ENCODE measurements at regions of chr1 and their contacts with region 1.

Region 1: GRCh38 chr1:156860113-156860627 is 495 bp upstream of the NTRK1 start:
- DNase-seq: peak; percentile 40
- H3K4me3 ChIP-seq: peak overlapping the region in 2 of 3 experiments; percentile 1 to 30
- H3K27ac ChIP-seq: no peak overlapping the region
- H3K4me1 ChIP-seq: peaks cover 17% of the 10 kb centered on the region
- H3K27me3 ChIP-seq: peaks cover 39 to 40% of the 10 kb centered on the region in 2 experiments
- CTCF ChIP-seq: peak; percentile 79 to 90
- POLR2A ChIP-seq: no peak

Region 2: GRCh38 chr1:156625436-156626078 is 234.6 kb before region 1 on chr1:
- CTCF ChIA-PET with region 1: interaction called, 12 read pairs
- POLR2A ChIA-PET with region 1: no interaction called
- dilution Hi-C with region 1: no loop called
- intact Hi-C with region 1: no loop called
- DNase-seq: peak; percentile 47
- H3K4me3 ChIP-seq: no peak overlapping the region
- H3K27ac ChIP-seq: no peak overlapping the region
- H3K4me1 ChIP-seq: peaks cover 10% of the 10 kb centered on the region
- H3K27me3 ChIP-seq: peaks cover 36% of the 10 kb centered on the region in 2 experiments
- CTCF ChIP-seq: peak; percentile 69 to 90
- POLR2A ChIP-seq: no peak

Region 3: GRCh38 chr1:156767101-156767878 is 92.9 kb before region 1 on chr1 and contains the start of gene PRCC:
- CTCF ChIA-PET with region 1: interaction called, 14 read pairs
- POLR2A ChIA-PET with region 1: no interaction called
- dilution Hi-C with region 1: no loop called
- intact Hi-C with region 1: loop called (anchors 1 kb)
- DNase-seq: peak; percentile 100
- H3K4me3 ChIP-seq: peak within 1 kb of the TSS; percentile 65 to 91 (median 74)
- H3K27ac ChIP-seq: peak within 1 kb of the TSS; percentile 80
- H3K4me1 ChIP-seq: peaks cover 18% of the 10 kb centered on the region
- H3K27me3 ChIP-seq: no peaks in the 10 kb centered on the region
- CTCF ChIP-seq: no peak
- POLR2A ChIP-seq: no peak
- total RNA-seq, gene PRCC: 65.1 and 71.5 TPM in 2 replicates

Region 4: DNA sequence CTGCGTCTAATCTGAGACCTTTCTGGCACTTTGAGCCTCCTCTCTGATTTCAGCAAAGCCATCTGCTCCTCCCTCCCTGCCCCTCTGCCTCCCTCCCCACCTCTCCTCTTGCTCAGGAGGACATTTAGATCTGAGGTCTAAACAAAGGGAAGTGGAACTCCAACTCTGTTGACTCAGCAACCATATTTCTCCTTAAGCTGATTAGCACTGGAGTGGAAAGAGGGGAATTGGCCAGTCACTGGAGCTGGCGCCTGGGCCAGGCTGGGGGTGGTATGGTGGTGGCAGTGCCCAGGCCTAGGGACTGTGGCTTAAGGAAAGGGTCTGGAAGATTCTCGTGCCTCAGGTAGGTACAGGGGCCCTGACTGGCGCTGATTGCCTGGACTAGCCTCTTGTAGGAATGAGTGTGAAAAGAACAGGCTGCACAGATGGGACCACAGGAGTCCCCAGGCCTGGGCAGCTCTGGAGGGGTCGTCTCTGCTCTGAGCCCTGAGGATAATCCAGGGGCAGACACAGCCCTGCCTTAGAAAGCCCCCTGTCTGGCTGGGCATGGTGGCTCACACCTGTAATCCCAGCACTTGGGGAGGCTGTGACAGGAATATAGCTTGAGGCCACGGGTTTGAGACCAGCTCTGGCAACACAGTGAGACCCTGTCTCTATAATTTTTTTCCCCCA is 55.5 kb before region 1 on chr1:
- CTCF ChIA-PET with region 1: interaction called, 39 read pairs
- POLR2A ChIA-PET with region 1: no interaction called
- dilution Hi-C with region 1: no loop called
- intact Hi-C with region 1: no loop called
- DNase-seq: peak; percentile 10
- H3K4me3 ChIP-seq: no peak overlapping the region
- H3K27ac ChIP-seq: no peak overlapping the region
- H3K4me1 ChIP-seq: peaks cover 10% of the 10 kb centered on the region
- H3K27me3 ChIP-seq: no peaks in the 10 kb centered on the region
- CTCF ChIP-seq: no peak
- POLR2A ChIP-seq: no peak

Region 5: DNA sequence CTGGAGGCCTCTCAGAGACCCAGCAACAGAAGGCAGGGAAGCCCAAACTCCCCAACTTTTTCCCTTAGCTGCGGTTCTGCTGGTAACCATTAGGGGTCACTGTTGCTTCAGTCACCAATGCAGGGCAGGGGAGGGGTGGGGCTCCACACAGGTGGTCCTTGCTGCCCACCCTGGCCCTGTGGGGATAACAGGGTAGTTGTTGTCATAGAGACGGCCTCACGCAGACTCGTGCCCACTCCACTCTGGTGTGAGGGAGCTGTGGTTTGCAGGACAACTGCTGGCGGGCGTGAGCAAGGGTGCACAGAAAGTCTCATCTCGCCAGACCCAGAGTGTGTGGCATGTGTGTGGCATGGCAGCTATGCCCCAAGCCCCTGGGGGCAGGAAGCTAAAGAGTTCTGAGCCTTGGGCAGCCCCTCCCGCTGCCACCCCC is 21.2 kb before region 1 on chr1:
- CTCF ChIA-PET with region 1: interaction called, 144 read pairs
- POLR2A ChIA-PET with region 1: no interaction called
- dilution Hi-C with region 1: no loop called
- intact Hi-C with region 1: loop called (anchors 2 kb)
- DNase-seq: peak; percentile 30
- H3K4me3 ChIP-seq: no peak overlapping the region
- H3K27ac ChIP-seq: no peak overlapping the region
- H3K4me1 ChIP-seq: peaks cover 16% of the 10 kb centered on the region
- H3K27me3 ChIP-seq: peaks cover 30 to 41% of the 10 kb centered on the region in 2 experiments
- CTCF ChIP-seq: peak; percentile 82 to 88
- POLR2A ChIP-seq: no peak

Region 6: GRCh38 chr1:156892190-156893047 is 32.2 kb after region 1 on chr1:
- CTCF ChIA-PET with region 1: interaction called, 36 read pairs
- POLR2A ChIA-PET with region 1: no interaction called
- dilution Hi-C with region 1: no loop called
- intact Hi-C with region 1: loop called (anchors 1 kb)
- DNase-seq: peak; percentile 87
- H3K4me3 ChIP-seq: no peak overlapping the region
- H3K27ac ChIP-seq: peak overlapping the region; percentile 64
- H3K4me1 ChIP-seq: peaks cover 31% of the 10 kb centered on the region
- H3K27me3 ChIP-seq: no peaks in the 10 kb centered on the region
- CTCF ChIP-seq: peak; percentile 91 to 97
- POLR2A ChIP-seq: no peak